Gastrocnemius medialis (tissue), 4 donors: ENCODE measurements at regions of chr9 and their contacts with region 1.

Region 1: GRCh38 chr9:96818535-96818934 is 35.8 kb downstream of the ZNF782 start:
- DNase-seq: no peak
- ATAC-seq: no peak
- H3K4me3 ChIP-seq: peak overlapping the region in 1 of 4 donors; percentile 20
- H3K27ac ChIP-seq: no peak overlapping the region
- H3K4me1 ChIP-seq: no peaks in the 10 kb centered on the region
- H3K27me3 ChIP-seq: no peaks in the 10 kb centered on the region
- CTCF ChIP-seq: no peak
- POLR2A ChIP-seq: no peak

Region 2: GRCh38 chr9:96758845-96759673 is 59.5 kb before region 1 on chr9:
- in situ Hi-C with region 1: no loop called
- intact Hi-C with region 1: loop called (anchors 10 kb)
- DNase-seq: no peak
- ATAC-seq: no peak
- H3K4me3 ChIP-seq: peak overlapping the region in 1 of 4 donors; percentile 24
- H3K27ac ChIP-seq: no peak overlapping the region
- H3K4me1 ChIP-seq: no peaks in the 10 kb centered on the region
- H3K27me3 ChIP-seq: no peaks in the 10 kb centered on the region
- CTCF ChIP-seq: no peak
- POLR2A ChIP-seq: no peak